ENCODE measurements at regions of chr9 and their contacts with region 1.

Region 1: DNA sequence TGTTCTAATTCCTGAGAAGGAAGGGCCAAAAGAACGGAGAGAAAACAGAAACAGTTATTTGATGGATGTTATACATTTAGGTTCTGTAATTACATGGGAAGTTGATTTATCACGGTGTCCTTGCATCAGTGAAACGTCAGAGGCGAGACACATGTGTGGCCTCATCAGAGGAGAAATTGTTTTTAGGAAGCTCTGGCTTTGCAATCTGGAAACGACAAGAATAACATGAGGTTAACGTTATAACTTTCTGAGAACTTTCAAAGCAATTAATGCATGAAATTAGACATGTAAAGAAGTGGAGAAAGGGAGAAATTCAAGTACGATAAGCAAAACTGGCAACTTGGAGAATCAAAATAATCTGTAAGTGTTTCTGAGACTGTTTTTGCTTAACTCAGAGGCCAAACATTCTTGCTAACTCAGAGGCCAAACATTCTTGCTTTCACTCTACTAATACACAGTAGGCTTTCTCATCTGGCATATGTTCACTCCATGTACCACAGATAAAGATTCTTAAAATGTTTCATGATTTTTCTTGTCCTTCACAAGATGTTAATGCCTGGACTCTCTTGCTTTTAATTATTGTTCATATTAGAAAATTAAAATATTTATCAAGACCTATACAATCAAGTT is 933.0 kb downstream of the TLE4 start:
- DNase-seq: no peak
- H3K4me3 Mint-ChIP-seq: no peak overlapping the region
- H3K27ac Mint-ChIP-seq: no peak overlapping the region
- H3K4me1 Mint-ChIP-seq: no peaks in the 10 kb centered on the region
- H3K27me3 Mint-ChIP-seq: no peaks in the 10 kb centered on the region
- CTCF ChIP-seq: no peak

Region 2: DNA sequence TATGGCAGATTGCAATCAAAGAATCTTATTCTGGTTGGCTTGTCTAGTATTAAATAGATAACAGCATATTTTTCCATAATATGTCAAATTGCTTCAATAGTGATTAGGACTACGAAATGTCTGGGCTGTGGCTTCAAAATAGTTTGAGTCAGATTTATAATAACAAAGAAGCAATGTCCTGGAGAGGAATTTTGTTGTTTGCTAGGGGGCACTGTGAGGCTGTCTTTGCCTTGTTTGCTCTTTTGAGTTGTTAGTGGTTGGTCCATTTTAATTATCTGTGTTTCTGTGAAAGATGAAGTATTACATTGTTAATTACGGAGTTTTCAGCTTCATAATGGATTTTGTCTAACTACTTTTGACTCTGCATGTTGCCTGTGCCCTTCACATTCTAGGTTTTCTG is 219.4 kb before region 1 on chr9:
- CTCF ChIA-PET with region 1: no interaction called
- intact Hi-C with region 1: loop called (anchors 5 kb)
- DNase-seq: no peak
- H3K4me3 Mint-ChIP-seq: no peak overlapping the region
- H3K27ac Mint-ChIP-seq: no peak overlapping the region
- H3K4me1 Mint-ChIP-seq: no peaks in the 10 kb centered on the region
- H3K27me3 Mint-ChIP-seq: no peaks in the 10 kb centered on the region
- CTCF ChIP-seq: no peak

Region 3: GRCh38 chr9:80449513-80449912 is 55.2 kb before region 1 on chr9:
- CTCF ChIA-PET with region 1: no interaction called
- intact Hi-C with region 1: no loop called
- DNase-seq: no peak
- H3K4me3 Mint-ChIP-seq: no peak overlapping the region
- H3K27ac Mint-ChIP-seq: no peak overlapping the region
- H3K4me1 Mint-ChIP-seq: no peaks in the 10 kb centered on the region
- H3K27me3 Mint-ChIP-seq: no peaks in the 10 kb centered on the region
- CTCF ChIP-seq: no peak

Measured in Calu3 (cell line).